ENCODE measurements at regions of chr2 and their contacts with region 1.

Region 1: GRCh38 chr2:27322766-27323595 is at the start of gene MPV17:
- DNase-seq: peak; percentile 91
- ATAC-seq: peak; percentile 95
- H3K4me3 ChIP-seq: peak within 1 kb of the TSS; percentile 72 to 99 (median 93)
- H3K4me3 Mint-ChIP-seq: peak within 1 kb of the TSS; percentile 99
- H3K27ac ChIP-seq: peak within 1 kb of the TSS; percentile 75 to 96
- H3K27ac Mint-ChIP-seq: peak within 1 kb of the TSS; percentile 97
- H3K4me1 ChIP-seq: peaks cover 12 to 20% of the 10 kb centered on the region in 2 donors
- H3K4me1 Mint-ChIP-seq: peaks cover 27% of the 10 kb centered on the region
- H3K27me3 ChIP-seq: no peaks in the 10 kb centered on the region
- H3K27me3 Mint-ChIP-seq: no peaks in the 10 kb centered on the region
- CTCF ChIP-seq: no peak
- total RNA-seq, gene MPV17: 103 and 111 TPM in 2 replicates

Region 2: GRCh38 chr2:27217217-27218121 is 105.5 kb before region 1 on chr2 and contains the start of gene CAD:
- CTCF ChIA-PET with region 1: no interaction called
- POLR2A ChIA-PET with region 1: no interaction called
- intact Hi-C with region 1: loop called (anchors 2 kb)
- DNase-seq: peak; percentile 89
- ATAC-seq: peak; percentile 86
- H3K4me3 ChIP-seq: peak within 1 kb of the TSS; percentile 11 to 85 (median 79)
- H3K4me3 Mint-ChIP-seq: peak within 1 kb of the TSS; percentile 98
- H3K27ac ChIP-seq: peak within 1 kb of the TSS; percentile 70 to 74
- H3K27ac Mint-ChIP-seq: peak within 1 kb of the TSS; percentile 87
- H3K4me1 ChIP-seq: peaks cover 28 to 33% of the 10 kb centered on the region in 2 donors
- H3K4me1 Mint-ChIP-seq: peaks cover 44% of the 10 kb centered on the region
- H3K27me3 ChIP-seq: no peaks in the 10 kb centered on the region
- H3K27me3 Mint-ChIP-seq: no peaks in the 10 kb centered on the region
- CTCF ChIP-seq: no peak
- total RNA-seq, gene CAD: 35.6 and 36.0 TPM in 2 replicates

Region 3: GRCh38 chr2:27356382-27357181 is 33.6 kb after region 1 on chr2 and contains the start of gene GTF3C2:
- CTCF ChIA-PET with region 1: no interaction called
- POLR2A ChIA-PET with region 1: interaction called, 9 read pairs
- intact Hi-C with region 1: loop called (anchors 1 kb)
- DNase-seq: peak; percentile 98
- ATAC-seq: peak; percentile 82
- H3K4me3 ChIP-seq: peak within 1 kb of the TSS; percentile 64 to 90 (median 82)
- H3K4me3 Mint-ChIP-seq: peak within 1 kb of the TSS; percentile 97
- H3K27ac ChIP-seq: peak within 1 kb of the TSS; percentile 86 to 88
- H3K27ac Mint-ChIP-seq: peak within 1 kb of the TSS; percentile 99
- H3K4me1 ChIP-seq: peaks cover 18 to 25% of the 10 kb centered on the region in 2 donors
- H3K4me1 Mint-ChIP-seq: peaks cover 48% of the 10 kb centered on the region
- H3K27me3 ChIP-seq: no peaks in the 10 kb centered on the region
- H3K27me3 Mint-ChIP-seq: no peaks in the 10 kb centered on the region
- CTCF ChIP-seq: no peak
- total RNA-seq, gene GTF3C2: 114 and 121 TPM in 2 replicates

Region 4: GRCh38 chr2:27409321-27410073 is 86.5 kb after region 1 on chr2 and contains the start of gene PPM1G:
- CTCF ChIA-PET with region 1: no interaction called
- POLR2A ChIA-PET with region 1: interaction called, 4 read pairs
- intact Hi-C with region 1: loop called (anchors 1 kb)
- DNase-seq: peak; percentile 96
- ATAC-seq: peak; percentile 97
- H3K4me3 ChIP-seq: peak within 1 kb of the TSS; percentile 28 to 96 (median 95)
- H3K4me3 Mint-ChIP-seq: peak within 1 kb of the TSS; percentile 87
- H3K27ac ChIP-seq: peak within 1 kb of the TSS; percentile 76 to 77
- H3K27ac Mint-ChIP-seq: peak within 1 kb of the TSS; percentile 90
- H3K4me1 ChIP-seq: peaks cover 15 to 20% of the 10 kb centered on the region in 2 donors
- H3K4me1 Mint-ChIP-seq: peaks cover 26% of the 10 kb centered on the region
- H3K27me3 ChIP-seq: no peaks in the 10 kb centered on the region
- H3K27me3 Mint-ChIP-seq: peaks cover 13% of the 10 kb centered on the region
- CTCF ChIP-seq: no peak
- total RNA-seq, gene PPM1G: 45.5 and 48.9 TPM in 2 replicates

Region 5: GRCh38 chr2:27582695-27583389 is 259.9 kb after region 1 on chr2 and contains the start of gene ZNF512:
- CTCF ChIA-PET with region 1: no interaction called
- POLR2A ChIA-PET with region 1: no interaction called
- intact Hi-C with region 1: loop called (anchors 2 kb)
- DNase-seq: peak; percentile 93
- ATAC-seq: peak; percentile 94
- H3K4me3 ChIP-seq: peak within 1 kb of the TSS; percentile 66 to 98 (median 80)
- H3K4me3 Mint-ChIP-seq: peak within 1 kb of the TSS; percentile 96
- H3K27ac ChIP-seq: peak within 1 kb of the TSS; percentile 70 to 72
- H3K27ac Mint-ChIP-seq: peak within 1 kb of the TSS; percentile 96
- H3K4me1 ChIP-seq: peaks cover 17 to 29% of the 10 kb centered on the region in 2 donors
- H3K4me1 Mint-ChIP-seq: peaks cover 40% of the 10 kb centered on the region
- H3K27me3 ChIP-seq: no peaks in the 10 kb centered on the region
- H3K27me3 Mint-ChIP-seq: peaks cover 1% of the 10 kb centered on the region
- CTCF ChIP-seq: no peak
- total RNA-seq, gene ZNF512: 65.2 and 72.3 TPM in 2 replicates

Region 6: GRCh38 chr2:28117104-28117596 is 794.2 kb after region 1 on chr2:
- CTCF ChIA-PET with region 1: no interaction called
- POLR2A ChIA-PET with region 1: no interaction called
- intact Hi-C with region 1: no loop called
- DNase-seq: no peak
- ATAC-seq: no peak
- H3K4me3 ChIP-seq: no peak overlapping the region
- H3K4me3 Mint-ChIP-seq: no peak overlapping the region
- H3K27ac ChIP-seq: no peak overlapping the region
- H3K27ac Mint-ChIP-seq: no peak overlapping the region
- H3K4me1 ChIP-seq: no peaks in the 10 kb centered on the region
- H3K4me1 Mint-ChIP-seq: no peaks in the 10 kb centered on the region
- H3K27me3 ChIP-seq: no peaks in the 10 kb centered on the region
- H3K27me3 Mint-ChIP-seq: no peaks in the 10 kb centered on the region
- CTCF ChIP-seq: no peak